Head of caudate nucleus (tissue), 42 donors: ENCODE measurements at regions of chr7 and their contacts with region 1.

Region 1: DNA sequence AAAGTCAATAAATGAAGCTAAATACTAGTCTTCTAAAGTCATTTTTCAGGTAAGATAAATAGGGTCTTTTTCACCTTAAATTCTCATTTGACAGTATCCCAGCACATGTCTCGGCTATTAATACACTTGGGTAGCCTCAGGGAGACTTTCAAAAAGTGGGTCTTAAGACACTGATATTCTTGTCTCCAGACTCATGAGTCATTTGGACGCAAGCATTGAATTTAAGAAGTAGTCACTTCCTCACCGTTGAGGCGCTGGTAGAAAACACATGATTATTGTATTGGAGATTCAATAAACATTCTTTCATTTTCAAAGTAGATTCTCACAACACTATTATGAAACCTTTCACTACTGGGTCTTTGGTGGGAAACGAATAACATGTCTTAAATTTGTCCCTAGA is 108.9 kb upstream of the SP8 start:
- DNase-seq: no peak

Region 2: DNA sequence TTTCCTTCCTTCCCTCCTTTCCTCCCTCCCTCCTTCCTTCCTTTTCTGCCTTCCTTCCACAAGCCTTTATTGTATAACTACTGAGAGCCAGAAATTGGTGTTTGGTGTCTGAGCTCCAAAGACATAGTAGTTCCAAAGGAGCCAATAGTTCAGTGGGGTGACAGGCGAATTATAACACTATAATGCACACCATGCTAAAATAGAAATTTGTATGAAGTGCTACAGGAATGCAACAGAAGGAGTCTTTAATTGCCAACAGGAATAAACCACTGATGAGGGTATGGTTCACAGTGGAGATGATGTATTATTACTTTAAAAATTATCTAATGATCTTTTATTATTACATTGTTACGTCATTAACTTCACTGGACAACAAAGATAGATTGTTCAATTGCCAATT is 49.9 kb after region 1 on chr7:
- intact Hi-C with region 1: loop called (anchors 10 kb)
- DNase-seq: no peak

Region 3: GRCh38 chr7:21146642-21147433 is 251.3 kb after region 1 on chr7:
- intact Hi-C with region 1: no loop called
- DNase-seq: no peak